Head of caudate nucleus (tissue), 42 donors: ENCODE measurements at regions of chr12 and their contacts with region 1.

Region 1: DNA sequence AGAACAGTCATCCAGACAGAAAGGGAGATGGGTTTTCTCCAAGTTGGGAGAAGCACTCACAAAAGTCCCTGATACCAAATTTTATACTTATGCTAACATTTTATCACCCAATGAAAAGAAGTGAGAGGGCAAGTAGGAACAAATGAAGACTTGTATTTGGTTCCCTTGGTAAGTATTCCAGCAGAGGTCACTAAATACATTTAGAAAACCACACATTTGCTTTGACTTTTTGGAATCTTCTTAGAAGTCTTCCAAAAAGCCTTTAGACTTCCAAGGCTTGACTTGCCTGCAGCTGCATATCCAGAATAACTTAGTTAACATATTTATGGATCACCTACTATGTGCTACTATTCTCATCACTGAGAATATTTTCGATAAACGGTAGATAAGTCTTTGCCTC is 3.1 kb upstream of the GYS2 start:
- DNase-seq: no peak

Region 2: GRCh38 chr12:21528953-21529352 is 78.7 kb before region 1 on chr12:
- intact Hi-C with region 1: no loop called
- DNase-seq: peak in 2 of 42 donors; percentile 9 to 17

Region 3: GRCh38 chr12:21677622-21678277 is 70.0 kb after region 1 on chr12:
- intact Hi-C with region 1: loop called (anchors 2 kb)
- DNase-seq: peak in 1 of 42 donors; percentile 7

Region 4: GRCh38 chr12:22121227-22121626 is 513.5 kb after region 1 on chr12:
- intact Hi-C with region 1: no loop called
- DNase-seq: no peak